ENCODE measurements at regions of chr11 and their contacts with region 1.

Region 1: DNA sequence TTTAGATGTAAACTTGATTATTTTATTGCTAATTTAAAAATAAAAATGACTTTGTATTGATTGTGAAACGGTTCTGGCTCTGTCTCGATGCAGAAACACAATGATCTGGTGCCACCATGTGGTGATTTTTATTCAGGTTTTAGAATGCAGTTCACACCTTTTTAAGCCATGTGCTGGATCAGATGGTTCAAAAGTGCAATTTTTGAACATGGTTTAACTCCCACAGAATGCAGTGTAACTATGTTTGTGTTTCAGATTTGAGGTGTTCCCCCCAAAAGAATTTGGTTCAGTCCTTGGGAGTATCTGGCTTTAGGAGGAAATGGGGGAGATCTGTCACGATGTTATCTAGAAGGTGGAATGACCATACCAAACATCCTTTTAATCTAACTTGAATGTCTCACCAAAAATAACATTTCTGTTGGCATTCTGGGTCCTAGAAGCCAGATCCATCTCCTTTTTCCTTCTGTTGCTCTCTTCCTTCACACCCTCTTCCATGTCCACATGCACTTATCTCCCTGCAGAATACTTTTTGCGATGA is 7.9 kb downstream of the MRPL16 start:
- DNase-seq: no peak
- H3K4me3 ChIP-seq: no peak overlapping the region
- H3K27ac ChIP-seq: peak overlapping the region in 1 of 4 donors; percentile 32
- H3K4me1 ChIP-seq: peaks cover 6 to 9% (median 7%) of the 10 kb centered on the region in 4 donors
- H3K27me3 ChIP-seq: no peaks in the 10 kb centered on the region
- CTCF ChIP-seq: peak; percentile 52 to 68 (median 64)
- EP300 ChIP-seq: no peak
- POLR2A ChIP-seq: no peak

Region 2: DNA sequence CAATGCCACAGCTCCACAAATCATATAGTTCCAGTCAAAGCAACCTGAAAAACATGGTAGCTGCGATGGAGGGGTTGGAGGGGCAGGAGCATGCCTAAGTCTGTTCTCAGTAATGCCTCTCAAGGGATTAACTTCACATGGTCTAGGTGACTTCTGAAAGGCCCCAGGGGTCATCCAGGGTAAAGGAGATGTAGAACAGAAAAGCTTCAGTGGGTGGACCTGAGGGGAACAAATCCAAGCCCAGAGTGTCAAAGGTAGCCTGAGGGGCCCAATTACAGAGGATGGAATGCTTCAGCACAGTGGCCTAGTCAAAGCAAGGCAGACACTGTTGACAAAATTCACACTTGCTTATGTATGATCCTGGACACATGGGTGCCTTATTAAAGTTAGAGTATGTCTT is 268.0 kb before region 1 on chr11:
- intact Hi-C with region 1: loop called (anchors 10 kb)
- DNase-seq: no peak
- H3K4me3 ChIP-seq: no peak overlapping the region
- H3K27ac ChIP-seq: no peak overlapping the region
- H3K4me1 ChIP-seq: peaks cover 0 to 12% (median 11%) of the 10 kb centered on the region in 4 donors
- H3K27me3 ChIP-seq: peaks cover 0 to 4% (median 0%) of the 10 kb centered on the region in 4 donors
- CTCF ChIP-seq: no peak
- EP300 ChIP-seq: no peak
- POLR2A ChIP-seq: no peak

Region 3: DNA sequence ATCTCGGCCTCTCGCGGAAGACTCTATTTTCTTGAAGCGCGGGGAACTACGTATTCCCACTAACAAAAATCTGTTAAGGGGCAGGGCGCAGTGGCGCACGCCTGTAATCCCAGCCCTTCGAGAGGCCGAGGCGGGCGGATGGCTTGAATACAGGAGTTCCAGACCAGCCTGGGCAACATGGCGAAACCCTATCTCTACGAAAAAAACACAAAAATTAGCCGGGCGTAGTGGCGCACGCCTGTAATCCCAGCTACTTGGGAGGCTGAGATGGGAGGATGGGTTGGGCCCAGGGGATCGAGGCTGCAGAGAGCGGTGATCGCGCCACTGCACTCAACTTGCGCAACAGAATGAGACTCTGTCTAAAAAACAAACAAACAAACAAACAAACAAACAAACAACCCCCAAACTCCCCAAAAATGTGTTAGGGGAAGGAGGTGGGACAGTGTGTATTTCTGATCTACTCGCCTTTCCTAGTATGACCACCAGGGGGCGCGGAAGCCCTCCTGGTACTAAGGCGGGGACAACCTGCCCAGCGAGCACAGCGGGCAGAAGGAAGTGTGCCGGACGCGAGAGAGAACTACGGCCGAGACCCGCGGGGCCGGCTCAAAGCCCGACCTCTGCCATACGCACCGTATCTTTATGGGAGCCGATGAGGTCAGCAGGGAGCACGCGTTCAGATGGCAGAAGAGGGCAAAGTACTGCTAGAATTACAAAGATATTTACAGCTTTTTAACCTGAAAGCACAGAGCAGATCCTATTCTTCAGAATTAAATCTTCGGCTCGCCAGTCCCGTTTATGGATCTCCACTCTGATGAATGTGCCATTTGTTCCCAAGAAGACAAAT is 48.8 kb before region 1 on chr11:
- intact Hi-C with region 1: loop called (anchors 1 kb)
- DNase-seq: peak; percentile 97
- H3K4me3 ChIP-seq: peak overlapping the region; percentile 81 to 98 (median 84)
- H3K27ac ChIP-seq: peak overlapping the region; percentile 90 to 96 (median 94)
- H3K4me1 ChIP-seq: peaks cover 13 to 31% (median 23%) of the 10 kb centered on the region in 4 donors
- H3K27me3 ChIP-seq: no peaks in the 10 kb centered on the region
- CTCF ChIP-seq: peak; percentile 87 to 98 (median 91)
- EP300 ChIP-seq: no peak
- POLR2A ChIP-seq: no peak

Region 4: DNA sequence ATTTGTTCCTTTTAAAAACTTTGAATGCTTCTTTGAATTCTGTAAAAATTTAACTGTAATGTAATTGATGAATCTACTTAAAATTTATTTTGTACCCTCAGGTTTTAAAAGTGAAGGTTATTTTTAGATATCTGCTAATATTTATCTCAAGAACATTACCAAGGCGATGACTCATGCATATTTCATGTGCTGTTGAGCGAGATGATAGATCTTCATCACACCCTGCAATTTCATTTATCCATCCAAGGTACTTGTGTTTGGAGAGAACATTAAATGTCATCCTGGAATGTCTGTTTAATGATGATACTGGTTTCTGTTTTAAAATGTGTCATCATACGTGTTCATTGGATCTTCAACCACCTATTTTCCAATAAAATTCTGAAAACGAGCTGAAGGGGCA is 154.4 kb after region 1 on chr11:
- intact Hi-C with region 1: no loop called
- DNase-seq: no peak
- H3K4me3 ChIP-seq: no peak overlapping the region
- H3K27ac ChIP-seq: no peak overlapping the region
- H3K4me1 ChIP-seq: peaks cover 0 to 19% (median 5%) of the 10 kb centered on the region in 4 donors
- H3K27me3 ChIP-seq: no peaks in the 10 kb centered on the region
- CTCF ChIP-seq: no peak
- EP300 ChIP-seq: no peak
- POLR2A ChIP-seq: no peak